Esophagus squamous epithelium (tissue), 5 donors: ENCODE measurements at regions of chr19 and their contacts with region 1.

Region 1: GRCh38 chr19:10852098-10852800 is 4.0 kb downstream of the C19orf38 start:
- DNase-seq: no peak
- H3K4me3 ChIP-seq: no peak overlapping the region
- H3K27ac ChIP-seq: no peak overlapping the region
- H3K4me1 ChIP-seq: no peaks in the 10 kb centered on the region
- H3K27me3 ChIP-seq: peaks cover 0 to 33% (median 0%) of the 10 kb centered on the region in 4 donors
- CTCF ChIP-seq: no peak
- POLR2A ChIP-seq: no peak

Region 2: GRCh38 chr19:10724551-10725071 is 127.6 kb before region 1 on chr19:
- intact Hi-C with region 1: loop called (anchors 5 kb)
- DNase-seq: no peak
- H3K4me3 ChIP-seq: no peak overlapping the region
- H3K27ac ChIP-seq: peak overlapping the region in 2 of 4 donors; percentile 11 to 39
- H3K4me1 ChIP-seq: peaks cover 10 to 84% (median 27%) of the 10 kb centered on the region in 3 donors
- H3K27me3 ChIP-seq: no peaks in the 10 kb centered on the region
- CTCF ChIP-seq: no peak
- POLR2A ChIP-seq: no peak